ENCODE measurements at regions of chr3 and their contacts with region 1.

Region 1: GRCh38 chr3:11060500-11061251 is 68.1 kb downstream of the SLC6A1 start:
- DNase-seq: peak; percentile 77
- ATAC-seq: peak; percentile 85

Region 2: DNA sequence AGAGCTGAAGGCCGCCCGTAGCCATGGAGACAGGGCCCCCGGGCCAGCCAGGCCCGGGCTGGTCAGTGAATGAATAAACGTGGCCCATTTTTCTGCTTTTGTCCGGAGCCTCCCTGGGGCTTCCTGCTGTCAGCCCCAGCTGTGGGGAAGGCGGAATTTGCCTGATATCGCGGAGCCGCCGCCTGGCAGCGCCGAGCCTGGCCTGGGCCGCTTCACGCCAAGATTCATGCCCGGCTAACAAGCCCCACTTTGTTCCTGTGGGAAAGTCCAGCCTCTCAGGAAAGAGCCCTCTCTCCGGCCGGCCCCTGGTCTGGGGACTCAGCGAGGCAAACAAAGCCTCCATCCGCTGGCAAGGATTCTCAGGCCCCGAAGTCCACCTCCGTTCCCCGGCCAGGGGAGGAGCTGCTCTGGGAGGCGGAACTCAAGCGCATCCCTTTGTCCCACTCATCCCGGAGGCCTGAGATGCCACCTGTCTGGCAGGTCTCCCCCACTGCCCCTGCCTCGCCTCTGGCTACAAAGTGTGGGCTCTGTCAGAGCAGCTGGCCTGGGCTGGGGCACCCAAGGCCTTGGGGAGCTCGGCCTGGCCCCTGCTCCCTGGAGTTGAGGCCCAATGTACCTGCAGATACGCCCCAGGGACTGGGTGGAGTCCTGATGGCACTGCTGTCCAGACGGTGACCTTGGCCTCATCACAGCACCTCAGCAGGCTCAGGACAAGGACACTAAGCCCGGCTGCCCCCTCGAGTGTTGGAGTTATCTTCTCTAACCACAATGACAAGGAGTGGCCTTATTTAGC is 296.2 kb before region 1 on chr3:
- intact Hi-C with region 1: loop called (anchors 5 kb)
- DNase-seq: no peak
- ATAC-seq: no peak

Region 3: DNA sequence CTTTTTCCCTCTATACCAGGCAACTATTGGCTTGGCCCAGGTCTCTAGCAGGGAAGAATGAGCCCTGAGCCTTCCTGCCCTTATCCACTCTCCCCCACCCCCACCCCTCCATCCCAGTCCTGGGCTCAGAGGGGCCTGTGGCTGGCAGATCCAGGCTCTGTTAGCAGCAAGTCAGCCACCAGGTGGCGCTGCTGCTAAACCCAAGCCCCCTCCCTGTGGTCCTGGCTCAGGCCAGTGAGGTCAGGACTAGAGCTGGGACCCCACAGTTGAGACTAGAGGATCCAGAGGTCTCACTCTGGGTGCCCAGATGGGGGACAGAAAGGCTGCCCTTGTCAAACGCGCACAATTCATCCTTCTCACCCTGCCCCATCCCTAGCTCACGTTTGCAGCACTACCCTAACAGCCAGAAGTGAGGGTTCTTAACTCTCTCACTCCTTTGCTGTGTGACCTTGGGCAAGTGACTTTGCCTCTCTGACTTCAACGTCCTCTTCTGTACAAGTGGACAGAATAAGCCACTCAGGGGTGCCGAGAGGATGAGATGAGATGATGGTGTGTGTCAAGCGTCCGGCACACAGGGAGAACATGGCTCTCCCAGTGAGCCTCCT is 114.9 kb before region 1 on chr3:
- intact Hi-C with region 1: loop called (anchors 1 kb)
- DNase-seq: peak; percentile 77
- ATAC-seq: peak; percentile 86

Region 4: GRCh38 chr3:11201246-11202024 is 140.8 kb after region 1 on chr3:
- intact Hi-C with region 1: loop called (anchors 5 kb)
- DNase-seq: no peak
- ATAC-seq: peak; percentile 34

Region 5: DNA sequence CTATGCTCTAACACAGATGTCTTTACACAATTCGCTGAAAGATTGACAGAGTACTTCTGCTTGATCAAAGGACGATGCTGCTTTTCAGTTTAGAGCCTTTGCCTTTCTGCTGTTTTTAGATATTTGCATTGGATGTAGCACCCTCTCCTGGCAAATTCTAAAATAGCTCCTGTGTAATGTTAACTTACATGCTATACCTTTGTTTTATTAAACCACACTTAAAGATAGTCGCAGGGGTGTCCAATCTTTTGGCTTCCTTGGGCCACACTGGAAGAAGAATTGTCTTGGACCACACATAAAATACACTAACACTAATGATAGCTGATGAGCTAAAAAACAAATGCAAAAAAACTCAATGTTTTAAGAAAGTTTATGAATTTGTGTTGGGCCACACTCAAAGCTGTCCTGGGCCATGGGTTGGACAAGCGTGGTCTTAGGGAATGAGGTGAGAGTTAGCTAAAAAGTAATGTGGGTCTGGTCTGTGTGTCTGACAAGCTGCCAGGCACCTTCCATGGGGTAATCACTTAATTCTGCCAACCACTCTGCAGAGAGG is 274.5 kb after region 1 on chr3:
- intact Hi-C with region 1: loop called (anchors 10 kb)
- DNase-seq: no peak
- ATAC-seq: peak; percentile 79